ENCODE measurements at regions of chr10 and their contacts with region 1.

Region 1: DNA sequence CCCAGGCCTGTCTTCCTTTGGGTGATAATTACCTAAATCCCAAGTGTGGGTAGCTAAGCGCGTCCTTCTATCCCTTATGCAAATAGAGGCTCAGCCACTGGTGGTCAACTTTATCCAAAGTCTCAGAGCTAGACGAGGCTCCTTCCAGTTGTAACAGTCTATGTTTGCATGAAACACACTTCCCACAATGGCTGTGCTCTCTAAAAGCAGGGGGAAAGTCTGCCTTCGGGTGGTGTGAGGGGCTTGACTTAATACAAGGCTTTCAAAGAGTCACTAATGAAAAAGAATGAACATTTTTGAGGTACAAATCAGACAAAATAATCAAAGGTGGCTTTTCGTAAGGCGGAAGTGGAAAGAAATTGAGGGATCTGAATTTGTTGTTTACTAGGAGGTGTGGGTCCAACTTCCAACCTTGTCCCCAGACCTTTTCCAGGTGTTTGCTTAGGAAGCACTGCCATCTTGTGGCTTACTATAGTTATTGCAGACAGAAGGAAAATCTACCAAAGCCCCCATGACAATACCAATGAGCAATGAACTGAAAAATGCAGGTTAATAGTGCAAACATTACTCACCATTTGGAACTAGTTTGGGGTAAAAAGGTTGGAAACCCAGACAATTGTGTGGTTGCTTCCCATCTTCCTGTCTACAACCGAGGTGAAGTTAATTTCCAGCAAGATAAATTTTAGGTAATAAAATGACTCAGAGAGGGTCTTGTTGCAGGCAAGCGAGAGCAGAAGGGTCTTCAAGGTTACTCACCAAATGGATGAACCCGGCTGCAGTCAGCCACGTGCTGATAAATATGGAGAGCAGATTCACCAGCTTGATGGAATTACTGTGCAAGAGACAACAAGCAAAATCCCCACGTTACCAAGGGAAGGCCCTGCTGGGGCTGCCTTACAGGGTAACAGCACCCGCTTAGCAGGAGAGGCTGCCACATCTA is 525.7 kb downstream of the KCNMA1 start:
- DNase-seq: peak; percentile 19 to 56
- H3K4me3 ChIP-seq: no peak overlapping the region
- H3K27ac ChIP-seq: no peak overlapping the region
- H3K4me1 ChIP-seq: peaks cover 13 to 45% (median 32%) of the 10 kb centered on the region in 4 experiments; a peak in 6 of 7 replicates
- H3K27me3 ChIP-seq: no peaks in the 10 kb centered on the region; a peak in 1 of 7 replicates
- CTCF ChIP-seq: peak in 2 of 3 experiments; percentile 82 to 84; a peak in 3 of 4 replicates
- EP300 ChIP-seq: no peak
- POLR2A ChIP-seq: no peak
- RAD21 ChIP-seq: peak; percentile 94 to 96

Region 2: DNA sequence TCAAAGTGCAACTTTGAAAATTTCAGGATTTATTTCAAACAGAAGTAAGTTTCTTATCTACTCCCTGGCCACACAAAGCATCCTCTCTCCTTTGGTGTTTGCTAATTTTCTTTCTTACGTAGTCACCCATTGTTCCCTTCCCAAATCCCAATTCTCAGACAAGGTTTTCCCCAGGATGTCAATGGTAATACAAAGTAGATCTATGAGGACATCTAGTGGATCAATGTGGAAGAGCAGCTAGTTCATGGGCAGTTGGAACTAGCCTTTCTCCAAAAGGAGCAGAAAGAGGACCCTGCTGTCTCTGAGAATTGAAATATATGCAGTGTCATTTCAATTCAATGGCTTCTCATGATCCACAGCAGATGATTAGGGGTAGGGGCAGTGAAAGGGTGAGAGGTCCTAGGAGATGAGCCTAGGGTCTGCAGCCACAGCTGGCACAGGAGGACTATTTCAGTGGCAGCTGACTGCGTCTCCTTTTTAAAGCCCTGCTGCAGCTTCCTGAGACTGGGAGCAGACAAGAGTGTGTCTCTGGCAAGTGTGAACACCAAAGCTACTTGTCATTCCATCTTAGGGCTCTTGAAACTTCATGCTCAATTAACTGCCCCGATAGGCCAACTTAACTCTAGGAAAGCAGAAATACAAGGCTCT is 106.8 kb before region 1 on chr10:
- CTCF ChIA-PET with region 1: interaction called, 15 read pairs
- POLR2A ChIA-PET with region 1: no interaction called
- DNase-seq: peak in 1 of 2 experiments; percentile 47
- H3K4me3 ChIP-seq: no peak overlapping the region
- H3K27ac ChIP-seq: no peak overlapping the region; the same call in 1 of the 2 replicates
- H3K4me1 ChIP-seq: no peaks in the 10 kb centered on the region
- H3K27me3 ChIP-seq: no peaks in the 10 kb centered on the region
- CTCF ChIP-seq: peak in 2 of 3 experiments; percentile 59 to 78; a peak in 3 of 4 replicates
- EP300 ChIP-seq: no peak
- POLR2A ChIP-seq: no peak
- RAD21 ChIP-seq: peak; percentile 86 to 87

Region 3: DNA sequence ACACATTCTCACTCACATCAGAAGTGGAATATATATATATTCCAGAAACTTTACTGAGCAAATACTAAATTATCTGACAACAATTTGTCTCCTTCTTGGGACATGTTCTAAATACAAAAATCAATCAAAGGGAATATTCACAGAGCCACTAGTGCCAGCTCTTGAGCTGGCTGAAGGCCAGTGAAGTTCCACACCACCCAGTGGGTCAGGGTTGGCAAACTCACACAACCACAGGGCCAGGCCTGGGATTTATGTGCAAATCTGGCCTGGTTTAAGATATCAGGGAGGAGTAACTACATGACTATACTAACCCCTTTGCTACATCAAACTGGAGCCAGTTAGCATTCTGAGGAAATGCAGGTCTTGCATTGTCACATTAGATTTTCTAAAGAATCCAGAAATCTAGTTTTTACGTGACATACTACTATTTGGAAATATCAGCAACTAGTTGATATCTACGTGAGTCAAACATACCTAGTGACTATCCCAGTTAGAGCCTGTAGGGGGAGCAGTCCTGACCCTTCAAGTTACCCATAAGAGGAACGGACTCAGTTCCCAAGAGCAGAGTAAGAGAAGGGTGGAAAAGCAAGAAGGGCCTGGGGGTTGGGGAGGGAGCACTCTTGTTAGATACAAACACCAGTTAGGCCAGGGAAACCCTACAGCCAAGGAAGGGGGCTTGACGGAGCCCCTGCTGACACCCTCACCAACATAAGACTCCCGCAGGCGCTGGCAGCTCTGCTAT is 74.7 kb before region 1 on chr10:
- CTCF ChIA-PET with region 1: interaction called, 11 read pairs
- POLR2A ChIA-PET with region 1: no interaction called
- DNase-seq: peak; percentile 34 to 65
- H3K4me3 ChIP-seq: 0 out of 8 replicates have a peak overlapping the region, but pooled peaks of 1 of the 4 experiments have one; percentile 3
- H3K27ac ChIP-seq: no peak overlapping the region
- H3K4me1 ChIP-seq: peaks cover 0 to 4% (median 2%) of the 10 kb centered on the region in 4 experiments; a peak in 4 of 7 replicates
- H3K27me3 ChIP-seq: no peaks in the 10 kb centered on the region; a peak in 2 of 7 replicates
- CTCF ChIP-seq: peak; percentile 15 to 76 (median 64)
- EP300 ChIP-seq: no peak
- POLR2A ChIP-seq: no peak
- RAD21 ChIP-seq: peak; percentile 14 to 48; a peak in 2 of 4 replicates

Region 4: DNA sequence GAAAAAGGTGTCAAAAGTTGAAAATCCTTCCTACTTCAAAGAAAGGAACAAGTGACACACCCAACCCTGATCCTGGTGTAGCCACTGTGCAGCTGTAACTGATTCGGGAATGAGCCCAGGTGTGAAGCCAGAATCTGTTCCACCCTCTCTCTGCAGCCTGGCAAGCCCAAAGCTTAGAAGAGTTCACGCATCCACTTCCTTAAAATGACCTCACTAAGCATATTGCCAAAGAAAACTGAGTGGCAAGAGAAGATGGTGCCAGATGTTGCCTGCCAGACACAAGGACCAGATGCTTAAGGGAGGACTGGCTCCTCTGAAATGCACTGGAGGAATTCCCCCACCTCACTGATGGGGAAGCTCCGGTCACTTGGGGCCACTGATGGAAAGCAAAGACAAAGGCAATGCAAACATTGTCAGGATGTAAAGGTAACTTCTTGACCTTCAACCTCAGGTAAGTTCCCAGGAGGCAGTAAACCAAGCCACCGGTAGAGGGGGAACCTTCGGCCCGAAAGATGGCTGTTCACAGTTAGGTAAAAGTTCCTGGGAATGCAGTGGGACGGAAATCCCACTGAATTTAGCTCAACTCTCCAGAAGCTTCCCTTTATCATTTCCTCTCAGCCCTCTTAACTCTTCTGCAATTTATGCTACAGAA is 29.2 kb before region 1 on chr10:
- CTCF ChIA-PET with region 1: interaction called, 18 read pairs
- POLR2A ChIA-PET with region 1: no interaction called
- DNase-seq: peak; percentile 46 to 79
- H3K4me3 ChIP-seq: no peak overlapping the region
- H3K27ac ChIP-seq: no peak overlapping the region
- H3K4me1 ChIP-seq: peaks cover 7 to 18% (median 13%) of the 10 kb centered on the region in 4 experiments
- H3K27me3 ChIP-seq: no peaks in the 10 kb centered on the region
- CTCF ChIP-seq: peak; percentile 68 to 85 (median 70)
- EP300 ChIP-seq: no peak
- POLR2A ChIP-seq: no peak
- RAD21 ChIP-seq: peak; percentile 28 to 46; a peak in 3 of 4 replicates

Region 5: GRCh38 chr10:77101341-77101740 is 10.5 kb before region 1 on chr10:
- CTCF ChIA-PET with region 1: interaction called, 20 read pairs
- POLR2A ChIA-PET with region 1: no interaction called
- DNase-seq: no peak
- H3K4me3 ChIP-seq: no peak overlapping the region
- H3K27ac ChIP-seq: no peak overlapping the region
- H3K4me1 ChIP-seq: no peaks in the 10 kb centered on the region
- H3K27me3 ChIP-seq: no peaks in the 10 kb centered on the region
- CTCF ChIP-seq: no peak
- EP300 ChIP-seq: no peak
- POLR2A ChIP-seq: no peak
- RAD21 ChIP-seq: no peak